Dorsolateral prefrontal cortex (tissue), 120 donors: ENCODE measurements at regions of chr9 and their contacts with region 1.

Region 1: GRCh38 chr9:9605681-9606080 is 1007.1 kb downstream of the PTPRD start:
- DNase-seq: no peak
- H3K4me3 ChIP-seq: no peak overlapping the region
- H3K27ac ChIP-seq: no peak overlapping the region
- H3K27me3 ChIP-seq: no peaks in the 10 kb centered on the region
- CTCF ChIP-seq: no peak

Region 2: DNA sequence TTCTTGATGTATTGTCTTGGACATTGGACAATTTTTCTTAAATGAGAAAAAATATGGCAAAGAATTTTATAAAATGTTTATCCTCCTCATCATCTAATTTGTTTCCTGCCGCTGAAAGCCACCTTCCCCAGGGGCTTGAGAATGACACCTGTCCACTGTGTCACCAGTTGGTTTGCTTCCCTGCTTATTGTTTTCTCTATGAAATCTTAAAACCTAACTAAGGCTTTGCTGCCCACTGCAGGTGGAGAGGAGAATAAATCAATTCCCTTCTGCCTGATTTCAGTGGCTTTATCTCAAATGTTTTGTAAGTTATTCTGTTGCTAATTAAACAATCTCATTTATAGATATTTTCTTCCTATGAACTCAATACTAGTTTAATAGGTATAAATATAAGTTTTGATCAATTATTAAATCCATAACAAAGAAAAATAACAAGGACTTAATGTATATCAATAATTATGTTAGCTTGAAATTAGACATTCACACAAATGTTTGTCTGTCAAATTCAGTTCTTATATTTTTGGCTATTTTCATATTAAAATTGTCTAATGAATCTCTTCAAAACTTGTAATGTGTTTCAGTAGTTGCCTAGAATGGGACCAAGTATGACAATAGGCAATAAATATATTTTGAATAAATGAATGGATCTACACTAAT is 184.7 kb after region 1 on chr9:
- intact Hi-C with region 1: loop called (anchors 2 kb)
- DNase-seq: peak in 3 of 10 donors; percentile 14 to 32 (median 25)
- H3K4me3 ChIP-seq: no peak overlapping the region
- H3K27ac ChIP-seq: peak overlapping the region in 1 of 59 donors; percentile 6
- H3K27me3 ChIP-seq: no peaks in the 10 kb centered on the region
- CTCF ChIP-seq: peak; percentile 61 to 93 (median 80)

Region 3: DNA sequence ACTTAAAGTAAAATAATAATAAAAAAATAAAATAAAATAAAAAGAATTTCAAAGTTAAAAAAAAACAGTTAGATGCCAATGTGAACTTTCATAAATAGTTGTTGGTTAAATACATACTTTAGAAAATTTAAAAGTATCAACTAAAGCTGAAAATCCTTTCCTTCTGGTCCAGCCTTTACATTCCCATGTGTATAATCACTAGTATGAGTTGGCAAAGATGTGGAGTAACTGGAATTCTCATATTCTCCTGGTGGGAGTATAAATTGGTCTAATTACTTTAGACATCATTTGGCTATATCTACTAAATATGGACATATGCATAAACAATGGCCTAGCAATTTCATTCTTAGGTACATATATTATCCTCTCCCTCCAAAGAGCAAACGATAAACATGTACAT is 387.3 kb after region 1 on chr9:
- intact Hi-C with region 1: no loop called
- DNase-seq: no peak
- H3K4me3 ChIP-seq: no peak overlapping the region
- H3K27ac ChIP-seq: no peak overlapping the region
- H3K27me3 ChIP-seq: no peaks in the 10 kb centered on the region
- CTCF ChIP-seq: no peak